ENCODE measurements at regions of chr4 and their contacts with region 1.

Region 1: DNA sequence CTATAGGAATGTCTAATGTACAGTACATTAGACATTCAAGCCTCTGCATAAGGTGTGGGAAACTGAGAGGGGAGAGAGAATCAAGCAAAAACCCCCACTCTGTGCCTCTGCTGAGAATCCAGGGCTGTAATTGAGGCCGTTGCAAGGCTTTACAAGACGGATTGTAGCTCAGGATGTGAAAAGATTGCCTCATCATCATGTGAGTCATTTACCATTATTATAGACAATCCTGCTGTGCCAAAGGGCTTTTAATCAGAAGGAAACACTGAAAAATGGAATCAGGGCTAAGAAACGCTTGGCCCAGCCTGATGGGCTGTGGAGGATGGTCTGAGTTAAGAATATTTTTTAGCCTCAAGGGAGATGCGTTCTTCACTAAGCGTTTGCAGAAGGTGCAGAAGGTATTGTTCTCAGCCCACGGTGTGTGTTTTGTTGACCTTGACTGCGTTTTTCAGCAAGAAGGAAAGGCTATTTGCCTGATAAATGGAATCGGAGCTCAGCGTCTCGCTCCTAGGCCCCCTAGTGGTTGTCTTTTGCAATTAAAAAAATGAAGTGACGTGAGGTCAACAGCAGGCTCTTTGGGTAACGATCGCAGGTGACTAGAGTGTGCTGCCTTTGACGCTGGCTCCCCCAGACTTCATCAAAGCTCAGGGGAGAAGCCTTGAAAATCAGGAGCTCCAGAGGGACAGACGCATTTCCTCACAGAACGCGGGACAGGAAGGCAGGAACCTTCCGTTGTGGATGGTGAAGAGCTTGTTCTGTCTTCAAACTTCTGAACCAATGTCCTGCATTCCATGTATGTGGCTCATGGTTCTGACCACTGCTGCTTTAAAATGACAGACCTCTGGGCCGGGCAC is 18.1 kb upstream of the CHRNA9 start:
- DNase-seq: peak; percentile 73
- CTCF ChIP-seq: peak; percentile 76

Region 2: DNA sequence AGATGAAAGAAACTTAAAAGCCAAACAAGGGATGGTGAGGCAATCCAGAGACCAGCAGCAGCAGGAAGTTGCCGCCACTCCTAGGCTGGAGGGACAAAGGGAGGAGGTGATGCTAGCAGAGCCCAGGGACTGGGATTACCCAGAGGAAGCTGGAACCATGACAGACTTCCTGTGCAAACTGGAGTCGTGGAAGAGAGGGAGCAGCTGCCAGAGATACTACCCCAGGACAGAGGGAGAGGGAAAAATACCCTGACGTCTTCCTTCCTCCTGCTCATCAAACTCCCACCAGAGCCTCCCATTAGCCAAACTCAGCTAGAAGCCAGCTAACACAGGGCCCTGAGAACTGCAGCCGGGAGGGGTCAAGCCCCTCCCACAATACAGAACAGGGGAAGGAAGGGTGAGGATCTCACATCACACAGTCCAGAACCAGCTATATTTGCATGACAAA is 1754.2 kb before region 1 on chr4:
- CTCF ChIA-PET with region 1: no interaction called
- POLR2A ChIA-PET with region 1: no interaction called
- DNase-seq: no peak
- CTCF ChIP-seq: no peak

Region 3: GRCh38 chr4:40056716-40057585 is 260.1 kb before region 1 on chr4 and contains the start of gene N4BP2:
- CTCF ChIA-PET with region 1: interaction called, 14 read pairs
- POLR2A ChIA-PET with region 1: no interaction called
- DNase-seq: peak; percentile 82
- CTCF ChIP-seq: peak; percentile 84

Region 4: GRCh38 chr4:40199999-40200874 is 116.8 kb before region 1 on chr4:
- CTCF ChIA-PET with region 1: interaction called, 14 read pairs
- POLR2A ChIA-PET with region 1: interaction called, 8 read pairs
- DNase-seq: peak; percentile 43
- CTCF ChIP-seq: no peak

Region 5: GRCh38 chr4:40228497-40229365 is 88.3 kb before region 1 on chr4:
- CTCF ChIA-PET with region 1: interaction called, 31 read pairs
- POLR2A ChIA-PET with region 1: interaction called, 3 read pairs
- DNase-seq: peak; percentile 56
- CTCF ChIP-seq: peak; percentile 21

Region 6: DNA sequence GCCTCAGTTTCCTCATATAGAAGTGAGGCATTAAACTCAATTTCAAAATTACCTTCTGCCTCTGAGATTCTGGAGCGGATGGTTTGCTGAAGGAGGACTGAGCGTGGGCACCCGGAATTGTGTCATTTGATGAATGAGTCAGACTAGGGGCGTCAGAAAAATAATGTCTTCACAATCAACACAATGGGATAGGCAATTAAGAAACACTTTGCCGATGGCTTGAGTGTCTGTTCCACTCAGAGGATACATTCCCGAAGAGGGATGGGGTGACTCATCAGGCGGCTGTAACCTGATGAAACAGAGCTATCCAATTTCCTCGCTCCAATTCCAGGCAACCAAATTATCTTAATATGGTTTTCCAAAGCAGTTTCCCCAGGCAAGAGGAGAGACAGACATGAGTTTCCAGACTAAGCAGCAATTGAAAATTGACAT is 16.9 kb after region 1 on chr4:
- CTCF ChIA-PET with region 1: interaction called, 82 read pairs
- POLR2A ChIA-PET with region 1: no interaction called
- DNase-seq: no peak
- CTCF ChIP-seq: no peak